Posterior vena cava (tissue), 2 donors: ENCODE measurements at regions of chr20 and their contacts with region 1.

Region 1: DNA sequence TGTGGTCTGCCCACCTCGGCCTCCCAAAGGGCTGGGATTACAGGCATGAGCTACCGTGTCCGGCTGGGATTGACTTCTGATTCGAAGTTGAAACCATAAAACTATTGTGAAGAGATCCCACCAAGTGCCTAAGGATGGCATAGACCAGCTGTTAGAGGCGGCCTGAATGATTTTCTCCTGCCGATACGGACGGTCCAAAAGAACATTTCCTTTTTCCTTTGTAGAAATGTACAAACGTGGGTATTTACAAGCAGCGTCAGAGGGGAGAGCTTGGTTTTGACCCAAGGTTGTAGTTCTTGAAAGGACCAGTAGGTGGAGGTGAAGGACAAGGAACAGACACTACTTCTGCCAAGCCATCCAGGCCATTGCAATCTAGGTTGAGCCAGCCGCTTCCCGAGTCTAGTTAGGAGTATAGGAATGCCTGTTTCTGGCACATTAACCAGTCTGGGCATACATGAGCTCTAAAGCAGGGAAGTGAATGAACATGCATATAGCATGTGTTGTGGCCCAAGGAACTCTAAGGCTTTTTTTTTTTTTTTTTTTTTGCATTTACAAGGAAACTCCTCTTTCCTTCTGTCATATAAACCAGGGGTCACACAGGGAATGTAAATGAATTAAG is 29.1 kb downstream of the MOCS3 start:
- DNase-seq: no peak

Region 2: DNA sequence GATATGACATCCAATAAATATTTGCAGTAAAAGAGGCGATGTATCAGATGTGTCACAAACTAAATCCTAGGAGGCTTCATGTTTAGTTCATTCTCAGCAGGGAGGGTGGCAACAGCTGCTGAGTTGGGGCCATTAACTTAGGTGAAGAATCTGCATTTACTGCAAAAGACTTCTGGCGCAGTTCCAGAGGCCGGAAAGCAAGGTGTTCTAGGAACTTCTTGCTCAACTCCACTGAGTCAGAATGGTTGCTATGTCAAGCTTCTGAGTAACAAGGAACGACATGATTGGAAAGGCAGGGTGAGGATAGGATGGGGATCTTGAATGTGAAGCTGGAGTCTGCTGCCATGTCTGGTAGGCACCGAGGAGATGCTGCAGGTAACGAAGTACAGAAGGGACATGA is 68.1 kb before region 1 on chr20:
- intact Hi-C with region 1: no loop called
- DNase-seq: no peak

Region 3: GRCh38 chr20:50958615-50959542 is 28.8 kb before region 1 on chr20 and contains the start of gene MOCS3:
- intact Hi-C with region 1: no loop called
- DNase-seq: peak; percentile 95
- total RNA-seq, gene MOCS3: 2.7 to 3.5 TPM

Region 4: DNA sequence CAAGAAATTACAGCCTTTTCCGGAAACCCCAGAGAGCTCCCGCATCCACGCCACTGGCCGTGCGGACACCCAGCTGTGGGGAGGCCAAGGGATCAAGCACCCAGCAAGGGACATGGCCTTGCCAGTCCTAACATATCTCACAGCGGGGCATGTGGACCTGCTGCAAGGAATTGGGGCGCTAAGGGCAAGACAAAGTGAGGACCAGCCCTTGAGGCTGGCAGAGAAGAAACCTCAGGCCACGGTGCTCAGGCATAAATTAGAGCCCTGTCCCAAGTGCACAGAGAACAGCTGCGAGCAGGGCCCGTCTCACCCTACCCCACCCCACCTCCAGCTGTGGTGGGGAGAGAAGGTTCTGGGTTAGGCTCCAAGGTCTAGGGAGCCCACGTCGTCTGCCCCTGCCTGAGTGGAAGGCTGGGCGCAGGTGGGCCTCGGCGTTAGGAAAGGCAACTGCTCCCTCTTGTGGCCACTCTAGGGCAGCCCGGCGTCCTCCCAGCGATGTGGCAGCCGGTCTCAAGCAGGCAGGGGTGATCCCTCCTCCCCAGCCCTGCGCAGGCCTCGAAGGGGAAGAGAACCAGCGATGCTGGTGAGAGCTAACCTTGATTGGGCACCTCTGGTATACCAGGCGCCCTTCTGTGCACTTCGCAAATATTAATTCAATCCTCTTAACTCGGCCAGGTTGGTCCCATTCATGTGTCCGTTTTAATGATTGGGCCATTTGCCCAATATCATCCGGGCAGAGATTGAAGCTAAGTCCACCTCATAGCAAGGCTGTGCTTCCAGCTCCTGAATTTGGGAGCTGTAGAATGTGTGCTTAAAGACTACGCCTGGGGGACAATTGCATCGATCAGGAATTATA is 319.0 kb after region 1 on chr20:
- intact Hi-C with region 1: loop called (anchors 5 kb)
- DNase-seq: peak; percentile 90